ENCODE measurements at regions of chr12 and their contacts with region 1.

Region 1: GRCh38 chr12:121917979-121918678 is at the start of gene CFAP251:
- DNase-seq: no peak
- H3K4me3 ChIP-seq: no peak within 1 kb of the TSS
- H3K27ac ChIP-seq: no peak within 1 kb of the TSS
- H3K4me1 ChIP-seq: peaks cover 13% of the 10 kb centered on the region
- H3K27me3 ChIP-seq: no peaks in the 10 kb centered on the region
- CTCF ChIP-seq: no peak
- total RNA-seq, gene CFAP251: 18.7 to 25.3 TPM

Region 2: GRCh38 chr12:121872546-121873215 is 45.4 kb before region 1 on chr12:
- CTCF ChIA-PET with region 1: no interaction called
- dilution Hi-C with region 1: no loop called
- in situ Hi-C with region 1: no loop called
- intact Hi-C with region 1: no loop called
- DNase-seq: peak; percentile 91
- H3K4me3 ChIP-seq: no peak overlapping the region
- H3K27ac ChIP-seq: no peak overlapping the region
- H3K4me1 ChIP-seq: peaks cover 5% of the 10 kb centered on the region
- H3K27me3 ChIP-seq: no peaks in the 10 kb centered on the region
- CTCF ChIP-seq: no peak

Region 3: DNA sequence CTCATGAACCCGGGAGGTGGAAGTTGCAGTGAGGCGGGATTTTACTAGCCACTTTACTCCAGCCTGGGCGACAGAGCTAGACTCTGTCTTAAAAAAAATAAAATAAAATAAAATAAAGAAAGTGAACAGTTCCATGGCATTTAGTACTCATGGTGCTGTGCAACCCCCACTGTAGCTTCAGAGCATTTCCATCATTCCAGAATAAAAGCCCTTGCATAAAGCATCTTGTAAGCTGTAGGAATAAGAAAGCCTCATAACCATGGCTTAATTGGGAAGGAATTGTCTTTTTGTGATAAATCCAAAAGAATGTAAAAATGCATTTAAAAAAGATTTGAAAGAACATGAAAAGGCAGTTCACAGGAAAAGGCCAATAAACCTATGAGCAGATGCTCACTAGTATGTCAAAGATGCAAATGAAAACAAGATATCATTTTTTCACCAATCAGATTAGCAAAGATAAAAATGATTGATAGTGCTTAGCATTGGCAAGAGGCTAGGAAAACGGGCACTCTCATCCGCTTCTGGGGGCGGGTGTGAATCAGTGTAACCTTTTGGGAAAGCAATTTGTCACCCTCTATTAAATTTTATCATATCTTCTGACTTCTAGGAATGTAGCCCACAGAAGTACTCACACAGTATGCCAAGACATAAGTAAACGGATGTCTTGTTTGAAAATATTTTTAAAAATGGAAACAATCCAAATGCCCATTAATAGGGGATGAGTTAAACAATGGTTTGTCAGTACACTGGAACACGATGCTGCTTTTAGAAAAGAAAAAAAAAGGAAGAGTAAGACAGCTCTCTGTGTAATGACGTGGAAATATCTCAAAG is 46.9 kb after region 1 on chr12:
- CTCF ChIA-PET with region 1: no interaction called
- dilution Hi-C with region 1: loop called (anchors 5 kb)
- in situ Hi-C with region 1: no loop called
- intact Hi-C with region 1: no loop called
- DNase-seq: peak; percentile 75
- H3K4me3 ChIP-seq: no peak overlapping the region
- H3K27ac ChIP-seq: peak overlapping the region; percentile 3
- H3K4me1 ChIP-seq: peaks cover 6% of the 10 kb centered on the region
- H3K27me3 ChIP-seq: no peaks in the 10 kb centered on the region
- CTCF ChIP-seq: no peak

Region 4: DNA sequence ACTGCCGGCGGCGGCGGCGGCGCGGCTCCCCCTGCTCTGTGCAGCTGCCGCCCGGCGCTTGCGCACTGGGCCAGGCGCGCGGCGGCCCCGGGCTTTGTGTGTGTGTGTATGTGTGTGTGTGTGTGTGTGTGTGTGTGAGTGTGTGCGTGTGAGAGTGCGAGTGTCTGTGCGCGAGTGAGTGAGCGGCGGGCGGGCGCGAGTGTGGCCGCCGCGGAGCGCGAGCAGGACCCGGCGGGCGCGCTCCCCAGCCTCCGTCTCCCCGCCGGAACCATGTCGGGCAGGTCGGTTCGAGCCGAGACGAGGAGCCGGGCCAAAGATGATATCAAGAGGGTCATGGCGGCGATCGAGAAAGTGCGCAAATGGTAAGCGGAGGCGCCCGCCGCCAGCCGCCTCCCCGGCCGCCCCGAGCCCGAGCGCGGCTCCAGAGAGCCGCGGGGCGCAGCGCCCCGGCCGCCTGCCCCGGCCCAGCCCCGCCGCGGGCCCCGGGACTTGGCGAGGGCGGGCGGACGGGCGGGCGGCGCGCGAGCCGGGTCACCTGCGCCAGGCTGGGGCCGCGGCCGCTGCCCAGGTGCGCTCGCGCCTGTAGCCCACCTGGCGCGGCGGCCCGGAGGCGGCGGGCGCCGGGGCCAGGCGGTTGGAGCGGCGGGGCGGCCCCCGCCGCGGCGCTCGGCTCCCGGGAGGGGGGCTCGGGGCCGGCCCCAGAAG is 103.8 kb after region 1 on chr12 and contains the start of gene BCL7A:
- CTCF ChIA-PET with region 1: no interaction called
- dilution Hi-C with region 1: no loop called
- in situ Hi-C with region 1: no loop called
- intact Hi-C with region 1: loop called (anchors 1 kb)
- DNase-seq: peak; percentile 81
- H3K4me3 ChIP-seq: peak within 1 kb of the TSS; percentile 66 to 80 (median 72)
- H3K27ac ChIP-seq: peak within 1 kb of the TSS; percentile 77
- H3K4me1 ChIP-seq: peaks cover 30% of the 10 kb centered on the region
- H3K27me3 ChIP-seq: no peaks in the 10 kb centered on the region
- CTCF ChIP-seq: no peak
- total RNA-seq, gene BCL7A: 15.8 to 27.7 TPM

Region 5: DNA sequence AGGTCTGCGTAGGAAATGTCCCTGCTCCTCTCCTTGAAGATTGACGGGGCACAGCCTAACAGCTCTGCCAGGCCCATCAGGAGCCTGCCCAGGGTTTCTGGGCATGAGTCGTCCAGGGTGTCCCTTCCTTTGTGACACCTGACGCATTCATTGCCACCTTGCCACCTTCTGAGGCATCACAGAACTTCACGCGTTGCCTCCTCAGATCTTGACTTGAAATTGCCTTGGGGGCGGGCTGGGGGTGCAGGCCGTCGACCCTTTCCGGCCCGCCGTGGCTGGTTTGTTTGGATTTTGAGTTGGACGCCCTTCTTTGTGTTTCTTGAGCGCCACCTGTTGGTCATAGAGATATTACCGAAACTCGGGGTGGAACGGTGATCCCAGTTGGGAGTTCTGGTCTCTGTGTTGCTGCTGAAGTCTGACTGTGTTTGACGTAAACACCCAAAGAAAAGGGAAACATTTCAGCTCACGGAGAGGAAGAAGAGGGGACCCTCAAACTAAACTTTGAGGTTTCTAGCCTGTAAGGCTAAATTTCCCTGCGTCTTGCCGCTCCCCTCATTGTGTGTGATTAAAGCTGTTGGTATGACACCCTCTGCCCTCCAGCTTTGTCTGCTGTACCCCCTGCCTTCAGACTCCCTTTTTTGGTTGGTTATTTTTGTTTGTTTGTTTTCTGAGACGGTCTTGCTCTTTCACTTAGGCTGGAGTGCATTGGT is 205.1 kb after region 1 on chr12:
- CTCF ChIA-PET with region 1: no interaction called
- dilution Hi-C with region 1: no loop called
- in situ Hi-C with region 1: no loop called
- intact Hi-C with region 1: loop called (anchors 2 kb)
- DNase-seq: peak; percentile 65
- H3K4me3 ChIP-seq: no peak overlapping the region
- H3K27ac ChIP-seq: no peak overlapping the region
- H3K4me1 ChIP-seq: peaks cover 9% of the 10 kb centered on the region
- H3K27me3 ChIP-seq: no peaks in the 10 kb centered on the region
- CTCF ChIP-seq: peak; percentile 52 to 71

Region 6: GRCh38 chr12:122190842-122191668 is 272.9 kb after region 1 on chr12:
- CTCF ChIA-PET with region 1: no interaction called
- dilution Hi-C with region 1: no loop called
- in situ Hi-C with region 1: no loop called
- intact Hi-C with region 1: loop called (anchors 10 kb)
- DNase-seq: peak; percentile 43
- H3K4me3 ChIP-seq: no peak overlapping the region
- H3K27ac ChIP-seq: no peak overlapping the region
- H3K4me1 ChIP-seq: no peaks in the 10 kb centered on the region
- H3K27me3 ChIP-seq: no peaks in the 10 kb centered on the region
- CTCF ChIP-seq: peak; percentile 88 to 92